Activated B cell treated with CpG ODN at 0.5 μM for 24 hours (primary cell): ENCODE measurements at regions of chr9 and their contacts with region 1.

Region 1: DNA sequence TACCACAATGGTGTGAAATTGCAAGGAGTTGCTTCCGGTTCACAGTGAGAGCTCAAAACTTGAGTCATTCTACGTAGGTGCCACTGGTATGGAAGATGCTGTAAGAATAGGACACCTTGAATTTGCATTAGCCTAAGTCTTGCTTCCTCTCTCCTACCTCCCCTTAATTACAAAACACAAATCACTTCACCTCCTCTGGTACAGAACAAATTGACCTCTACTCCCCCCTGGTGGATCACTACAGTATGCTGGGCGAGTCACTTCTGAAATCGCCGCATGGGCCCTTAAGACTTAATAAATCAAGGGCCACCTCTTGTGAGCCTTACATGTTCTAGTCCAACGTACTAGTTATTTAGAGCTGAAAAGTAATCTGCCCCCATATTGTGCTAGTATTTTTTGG is 145.3 kb upstream of the SMARCA2 start:
- DNase-seq: no peak
- ATAC-seq: peak; percentile 94
- H3K4me3 Mint-ChIP-seq: no peak overlapping the region
- H3K27ac Mint-ChIP-seq: peak overlapping the region; percentile 15
- H3K4me1 Mint-ChIP-seq: peaks cover 9% of the 10 kb centered on the region
- H3K27me3 Mint-ChIP-seq: no peaks in the 10 kb centered on the region
- CTCF ChIP-seq: no peak

Region 2: DNA sequence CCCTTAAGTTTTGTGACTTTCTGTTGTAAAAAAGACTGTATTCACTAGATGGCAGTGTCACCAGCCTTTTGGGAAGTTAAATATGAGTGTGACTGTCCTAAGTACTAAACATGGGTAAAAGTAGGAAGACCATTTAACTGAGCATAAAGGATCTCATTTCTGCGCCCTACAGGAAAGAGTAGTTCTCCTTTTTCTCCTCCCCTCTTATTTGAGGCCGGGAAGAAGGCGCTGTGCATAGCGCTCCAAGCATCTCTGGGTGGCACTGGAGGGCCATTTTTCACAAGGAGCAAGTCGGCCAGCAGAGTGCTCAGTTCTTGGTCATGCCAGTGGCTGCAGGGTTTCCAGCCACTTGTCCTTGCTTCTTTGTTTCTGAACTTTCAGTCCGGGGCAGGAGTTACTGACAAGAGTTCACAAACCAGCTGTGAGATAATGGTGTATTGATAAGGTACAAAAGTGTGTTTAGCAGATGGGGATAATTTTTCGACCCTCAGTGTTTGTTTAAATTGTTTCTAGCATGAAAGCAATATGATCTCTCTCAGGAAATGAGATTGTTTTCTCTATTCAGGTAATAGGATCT is 1256.0 kb before region 1 on chr9:
- CTCF ChIA-PET with region 1: no interaction called
- POLR2A ChIA-PET with region 1: no interaction called
- intact Hi-C with region 1: loop called (anchors 10 kb)
- DNase-seq: no peak
- ATAC-seq: peak; percentile 49
- H3K4me3 Mint-ChIP-seq: no peak overlapping the region
- H3K27ac Mint-ChIP-seq: no peak overlapping the region
- H3K4me1 Mint-ChIP-seq: peaks cover 7% of the 10 kb centered on the region
- H3K27me3 Mint-ChIP-seq: no peaks in the 10 kb centered on the region
- CTCF ChIP-seq: no peak

Region 3: GRCh38 chr9:1460143-1460769 is 409.6 kb before region 1 on chr9:
- CTCF ChIA-PET with region 1: no interaction called
- POLR2A ChIA-PET with region 1: no interaction called
- intact Hi-C with region 1: loop called (anchors 1 kb)
- DNase-seq: no peak
- ATAC-seq: no peak
- H3K4me3 Mint-ChIP-seq: no peak overlapping the region
- H3K27ac Mint-ChIP-seq: no peak overlapping the region
- H3K4me1 Mint-ChIP-seq: no peaks in the 10 kb centered on the region
- H3K27me3 Mint-ChIP-seq: peaks cover 4% of the 10 kb centered on the region
- CTCF ChIP-seq: no peak

Region 4: DNA sequence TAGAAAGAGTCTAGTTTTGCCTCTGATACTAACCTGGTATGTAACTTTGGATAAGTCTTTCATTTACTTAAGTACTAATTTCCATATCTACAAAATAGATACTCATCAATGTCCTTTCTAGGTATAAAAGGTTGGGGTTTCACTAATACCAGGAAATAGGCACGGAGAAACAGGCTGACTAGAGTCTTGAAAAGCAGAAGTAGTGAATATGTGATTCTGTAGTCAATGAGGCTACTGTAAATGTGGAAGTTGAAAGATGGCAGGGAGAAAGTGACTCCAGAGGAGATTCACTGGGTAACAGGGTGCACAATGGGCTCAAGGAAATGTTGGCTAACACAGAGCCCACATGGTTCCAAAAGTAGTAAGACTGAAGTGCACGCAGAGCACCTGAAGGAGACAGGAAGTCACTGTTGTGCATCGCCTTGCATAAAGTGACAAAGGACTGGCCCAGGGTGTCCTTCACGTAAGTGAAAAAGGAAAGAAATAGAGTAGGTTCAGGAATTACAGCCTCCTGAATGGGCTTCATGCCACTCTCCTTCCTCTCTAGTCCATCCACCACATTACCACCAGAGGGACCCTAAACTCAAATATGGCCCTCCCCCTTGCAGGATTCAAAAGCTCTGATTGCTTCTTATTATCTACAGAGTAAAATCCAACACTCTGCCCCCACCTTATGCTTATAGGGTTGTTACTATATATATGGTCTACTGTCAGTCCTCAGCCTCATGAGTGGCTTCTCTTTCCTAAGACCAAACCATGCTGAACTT is 142.7 kb before region 1 on chr9:
- CTCF ChIA-PET with region 1: no interaction called
- POLR2A ChIA-PET with region 1: no interaction called
- intact Hi-C with region 1: loop called (anchors 5 kb)
- DNase-seq: no peak
- ATAC-seq: no peak
- H3K4me3 Mint-ChIP-seq: no peak overlapping the region
- H3K27ac Mint-ChIP-seq: no peak overlapping the region
- H3K4me1 Mint-ChIP-seq: no peaks in the 10 kb centered on the region
- H3K27me3 Mint-ChIP-seq: peaks cover 3% of the 10 kb centered on the region
- CTCF ChIP-seq: no peak

Region 5: GRCh38 chr9:1895946-1896345 is 26.1 kb after region 1 on chr9:
- CTCF ChIA-PET with region 1: no interaction called
- POLR2A ChIA-PET with region 1: no interaction called
- intact Hi-C with region 1: no loop called
- DNase-seq: no peak
- ATAC-seq: no peak
- H3K4me3 Mint-ChIP-seq: no peak overlapping the region
- H3K27ac Mint-ChIP-seq: no peak overlapping the region
- H3K4me1 Mint-ChIP-seq: no peaks in the 10 kb centered on the region
- H3K27me3 Mint-ChIP-seq: no peaks in the 10 kb centered on the region
- CTCF ChIP-seq: no peak

Region 6: GRCh38 chr9:2087500-2088313 is 217.9 kb after region 1 on chr9:
- CTCF ChIA-PET with region 1: no interaction called
- POLR2A ChIA-PET with region 1: no interaction called
- intact Hi-C with region 1: loop called (anchors 5 kb)
- DNase-seq: no peak
- ATAC-seq: peak; percentile 83
- H3K4me3 Mint-ChIP-seq: no peak overlapping the region
- H3K27ac Mint-ChIP-seq: no peak overlapping the region
- H3K4me1 Mint-ChIP-seq: no peaks in the 10 kb centered on the region
- H3K27me3 Mint-ChIP-seq: no peaks in the 10 kb centered on the region
- CTCF ChIP-seq: peak; percentile 40